Activated naive CD4-positive, alpha-beta T cell treated with anti-CD3 and anti-CD28 coated beads for 36 hours (primary cell): ENCODE measurements at regions of chr19 and their contacts with region 1.

Region 1: DNA sequence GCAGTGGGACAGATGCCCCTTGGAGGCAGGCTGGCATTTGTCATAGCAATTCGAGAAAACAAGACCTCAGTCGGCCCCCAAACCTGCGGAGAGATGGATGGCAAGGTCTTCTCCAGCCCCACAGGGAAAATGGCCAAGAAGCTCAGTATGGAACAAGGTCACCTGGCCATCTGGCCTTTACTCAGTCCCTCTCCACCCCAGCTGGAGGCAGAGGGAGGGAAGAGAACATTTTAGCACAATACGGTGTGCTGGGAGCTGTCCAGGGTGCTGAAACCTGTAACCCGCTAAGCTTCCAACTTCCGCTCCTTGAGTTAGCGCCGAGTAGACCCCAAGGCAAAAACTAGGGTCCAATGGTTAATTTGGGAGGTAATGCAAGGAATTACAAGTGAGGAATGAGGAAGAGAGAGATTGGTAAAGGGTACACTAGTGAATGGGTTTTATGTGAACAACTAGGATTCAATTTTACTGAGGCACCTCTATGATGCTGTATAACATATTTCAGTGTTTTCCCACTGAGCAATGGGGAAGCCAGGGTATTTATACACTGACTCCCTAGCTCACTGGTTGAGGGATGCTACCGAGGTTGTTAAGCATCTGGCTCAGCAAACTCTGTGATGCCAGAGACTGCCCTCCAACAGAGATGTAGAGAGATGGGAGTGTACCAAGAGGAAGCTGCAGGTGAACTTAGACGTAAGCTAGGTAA is 64.3 kb downstream of the CACNA1A start:
- DNase-seq: peak; percentile 69
- H3K4me3 Mint-ChIP-seq: no peak overlapping the region
- H3K27ac Mint-ChIP-seq: no peak overlapping the region
- H3K4me1 Mint-ChIP-seq: no peaks in the 10 kb centered on the region
- H3K27me3 Mint-ChIP-seq: peaks cover 5% of the 10 kb centered on the region

Region 2: DNA sequence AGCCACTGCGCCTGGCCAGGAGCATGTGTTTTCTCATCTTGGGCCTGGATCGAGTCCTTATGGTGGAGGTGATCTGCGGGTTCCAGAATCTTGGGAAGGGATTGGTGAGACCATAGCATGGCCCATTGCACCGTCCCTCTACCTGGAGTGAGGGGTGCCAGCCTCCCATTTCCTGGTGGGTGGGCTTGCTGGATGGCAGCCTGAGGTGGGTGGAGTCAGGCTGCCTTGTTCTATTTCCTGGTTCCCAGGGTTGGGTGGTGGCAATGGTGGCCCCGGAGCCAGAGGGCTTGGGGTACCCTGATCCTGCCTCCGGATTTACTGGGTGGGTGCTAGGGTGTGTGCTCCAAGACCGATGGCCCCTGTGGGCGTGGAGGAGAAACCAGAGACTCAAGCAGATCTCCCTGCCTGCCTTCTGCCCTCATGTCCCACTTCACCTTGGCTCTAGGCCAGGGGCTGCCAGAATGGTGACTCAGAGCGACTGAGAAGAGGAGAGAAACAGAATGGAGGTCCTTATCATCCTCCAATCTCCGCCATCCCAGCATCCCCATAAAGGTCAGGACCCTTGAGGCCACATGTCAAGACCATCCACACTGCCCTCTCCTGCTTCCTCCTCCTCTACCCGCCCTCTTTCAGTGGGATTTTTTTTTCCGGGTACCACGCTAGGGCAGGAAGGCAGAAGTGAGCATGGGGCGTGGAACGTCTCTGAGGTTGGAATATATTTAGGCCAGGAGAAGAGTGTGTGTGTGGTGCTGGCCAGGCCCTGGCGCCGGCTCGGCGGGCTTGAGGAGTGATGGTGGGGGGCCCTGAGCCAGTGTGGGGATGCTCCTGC is 269.7 kb before region 1 on chr19:
- CTCF ChIA-PET with region 1: no interaction called
- intact Hi-C with region 1: no loop called
- DNase-seq: peak; percentile 93
- H3K4me3 Mint-ChIP-seq: peak overlapping the region; percentile 90
- H3K27ac Mint-ChIP-seq: peak overlapping the region; percentile 99
- H3K4me1 Mint-ChIP-seq: peaks cover 61% of the 10 kb centered on the region
- H3K27me3 Mint-ChIP-seq: no peaks in the 10 kb centered on the region

Region 3: DNA sequence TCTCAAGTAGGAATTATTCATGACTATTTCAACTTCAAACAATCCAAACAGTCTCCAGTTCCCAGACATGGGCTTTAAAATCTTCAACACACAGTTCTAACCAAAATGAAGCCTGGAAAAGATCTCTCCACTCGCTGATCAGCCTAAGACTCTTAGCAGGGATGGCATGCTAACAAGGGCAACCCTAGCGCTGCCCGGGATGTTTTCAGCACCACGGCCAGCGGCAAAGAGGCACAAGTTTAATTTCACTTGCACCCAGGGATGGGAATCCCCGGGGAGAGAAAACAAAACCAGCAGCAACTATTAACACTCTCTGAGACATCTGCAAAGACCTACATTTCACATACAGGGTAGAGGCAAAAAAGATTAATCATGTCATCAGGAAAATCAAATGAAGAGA is 21.3 kb after region 1 on chr19:
- CTCF ChIA-PET with region 1: no interaction called
- intact Hi-C with region 1: loop called (anchors 1 kb)
- DNase-seq: peak; percentile 49
- H3K4me3 Mint-ChIP-seq: no peak overlapping the region
- H3K27ac Mint-ChIP-seq: no peak overlapping the region
- H3K4me1 Mint-ChIP-seq: no peaks in the 10 kb centered on the region
- H3K27me3 Mint-ChIP-seq: peaks cover 15% of the 10 kb centered on the region